ENCODE measurements at regions of chr14 and their contacts with region 1.

Region 1: GRCh38 chr14:74945823-74946682 is 9.3 kb downstream of the PGF start:
- DNase-seq: peak; percentile 61
- ATAC-seq: peak; percentile 67
- H3K4me3 Mint-ChIP-seq: no peak overlapping the region
- H3K27ac Mint-ChIP-seq: peak overlapping the region; percentile 46
- H3K4me1 Mint-ChIP-seq: peaks cover 34% of the 10 kb centered on the region
- H3K27me3 Mint-ChIP-seq: peaks cover 2% of the 10 kb centered on the region
- CTCF ChIP-seq: no peak

Region 2: DNA sequence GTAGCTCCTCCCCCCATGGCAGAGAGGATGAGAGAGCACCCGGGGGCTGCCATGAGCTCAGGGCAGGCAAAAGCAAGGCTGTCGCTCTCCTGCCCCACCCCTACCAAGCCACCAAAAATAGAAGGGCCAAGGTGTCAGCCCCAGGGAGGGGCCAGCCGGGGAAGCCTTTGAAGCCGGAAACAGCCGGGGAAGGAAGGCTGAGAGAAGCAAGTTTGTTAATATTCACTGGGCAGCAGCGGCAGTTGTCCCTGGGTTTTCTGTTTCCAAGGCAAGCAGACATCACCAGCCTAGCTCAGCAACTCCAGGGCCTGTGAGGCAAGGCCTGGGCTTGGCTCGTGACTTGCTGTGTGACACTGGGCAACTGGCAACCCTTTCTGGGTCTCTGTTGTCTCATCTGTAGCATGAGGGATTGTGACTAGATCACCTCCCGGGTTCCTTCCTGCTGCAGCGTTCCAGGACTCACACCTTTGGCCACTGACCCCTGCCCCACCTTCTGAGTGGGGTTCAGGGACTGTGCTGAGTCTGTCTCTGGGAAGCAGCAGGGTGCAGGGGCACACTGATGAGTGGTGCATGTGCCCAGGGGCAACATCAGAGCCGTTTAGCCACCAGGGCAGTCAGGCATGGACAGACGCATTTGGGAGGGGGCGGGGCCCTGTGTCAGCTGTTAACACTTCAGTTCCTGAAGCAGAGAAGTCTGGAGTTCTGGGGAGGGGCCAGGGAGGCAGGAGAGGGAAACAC is 544.4 kb before region 1 on chr14:
- CTCF ChIA-PET with region 1: no interaction called
- POLR2A ChIA-PET with region 1: no interaction called
- intact Hi-C with region 1: loop called (anchors 5 kb)
- DNase-seq: peak; percentile 74
- ATAC-seq: peak; percentile 90
- H3K4me3 Mint-ChIP-seq: peak overlapping the region; percentile 87
- H3K27ac Mint-ChIP-seq: peak overlapping the region; percentile 98
- H3K4me1 Mint-ChIP-seq: peaks cover 54% of the 10 kb centered on the region
- H3K27me3 Mint-ChIP-seq: no peaks in the 10 kb centered on the region
- CTCF ChIP-seq: no peak

Region 3: GRCh38 chr14:74608959-74609611 is 337.0 kb before region 1 on chr14:
- CTCF ChIA-PET with region 1: no interaction called
- POLR2A ChIA-PET with region 1: no interaction called
- intact Hi-C with region 1: no loop called
- DNase-seq: peak; percentile 68
- ATAC-seq: peak; percentile 57
- H3K4me3 Mint-ChIP-seq: no peak overlapping the region
- H3K27ac Mint-ChIP-seq: no peak overlapping the region
- H3K4me1 Mint-ChIP-seq: peaks cover 15% of the 10 kb centered on the region
- H3K27me3 Mint-ChIP-seq: peaks cover 8% of the 10 kb centered on the region
- CTCF ChIP-seq: peak; percentile 99

Region 4: GRCh38 chr14:74641601-74642391 is 304.3 kb before region 1 on chr14:
- CTCF ChIA-PET with region 1: no interaction called
- POLR2A ChIA-PET with region 1: no interaction called
- intact Hi-C with region 1: no loop called
- DNase-seq: no peak
- ATAC-seq: no peak
- H3K4me3 Mint-ChIP-seq: no peak overlapping the region
- H3K27ac Mint-ChIP-seq: no peak overlapping the region
- H3K4me1 Mint-ChIP-seq: no peaks in the 10 kb centered on the region
- H3K27me3 Mint-ChIP-seq: peaks cover 10% of the 10 kb centered on the region
- CTCF ChIP-seq: no peak

Region 5: DNA sequence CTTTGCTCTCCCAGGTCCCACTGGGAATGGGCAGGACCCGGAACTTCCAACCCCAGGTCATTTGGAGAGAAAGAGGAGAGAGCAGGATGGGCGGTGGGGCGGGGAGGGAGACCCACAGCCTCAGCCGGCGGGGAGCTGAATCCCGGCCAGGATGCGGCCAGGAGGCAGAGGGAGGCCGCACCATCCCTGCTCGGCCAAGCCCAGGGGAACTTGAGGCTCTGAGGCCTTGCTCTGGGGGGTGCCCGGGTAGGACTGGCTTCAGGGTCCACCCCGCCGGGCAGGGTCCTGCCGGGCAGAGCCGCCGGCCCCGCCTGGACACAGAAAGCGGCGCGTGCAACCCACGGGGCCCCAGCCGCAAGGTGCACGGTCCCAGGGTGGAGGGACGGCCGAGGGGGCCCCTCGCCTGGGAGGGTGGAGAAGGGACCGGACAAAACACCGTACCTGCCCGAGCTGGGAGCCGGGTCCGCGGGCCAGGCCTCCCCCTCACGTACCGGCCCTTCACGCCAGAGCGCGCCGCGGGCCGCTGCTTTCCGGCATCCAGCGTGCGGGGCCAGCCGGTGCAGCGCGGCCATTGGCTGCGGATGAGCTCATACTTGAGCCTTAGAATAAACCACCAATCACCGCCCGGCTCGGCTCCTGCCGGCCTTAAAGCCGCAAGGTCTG is 23.2 kb before region 1 on chr14 and contains the start of gene RPS6KL1:
- CTCF ChIA-PET with region 1: interaction called, 3 read pairs
- POLR2A ChIA-PET with region 1: interaction called, 11 read pairs
- intact Hi-C with region 1: no loop called
- DNase-seq: peak; percentile 59
- ATAC-seq: peak; percentile 98
- H3K4me3 Mint-ChIP-seq: peak within 1 kb of the TSS; percentile 69
- H3K27ac Mint-ChIP-seq: no peak within 1 kb of the TSS
- H3K4me1 Mint-ChIP-seq: peaks cover 8% of the 10 kb centered on the region
- H3K27me3 Mint-ChIP-seq: peaks cover 2% of the 10 kb centered on the region
- CTCF ChIP-seq: no peak
- total RNA-seq, gene RPS6KL1: 5.2 and 7.0 TPM in 2 replicates

Region 6: GRCh38 chr14:74963705-74964271 is 17.7 kb after region 1 on chr14:
- CTCF ChIA-PET with region 1: interaction called, 8 read pairs
- POLR2A ChIA-PET with region 1: no interaction called
- intact Hi-C with region 1: loop called (anchors 2 kb)
- DNase-seq: no peak
- ATAC-seq: no peak
- H3K4me3 Mint-ChIP-seq: no peak overlapping the region
- H3K27ac Mint-ChIP-seq: no peak overlapping the region
- H3K4me1 Mint-ChIP-seq: peaks cover 20% of the 10 kb centered on the region
- H3K27me3 Mint-ChIP-seq: no peaks in the 10 kb centered on the region
- CTCF ChIP-seq: no peak

Region 7: GRCh38 chr14:75088574-75089373 is 142.7 kb after region 1 on chr14:
- CTCF ChIA-PET with region 1: interaction called, 26 read pairs
- POLR2A ChIA-PET with region 1: no interaction called
- intact Hi-C with region 1: loop called (anchors 1 kb)
- DNase-seq: no peak
- ATAC-seq: peak; percentile 37
- H3K4me3 Mint-ChIP-seq: no peak overlapping the region
- H3K27ac Mint-ChIP-seq: no peak overlapping the region
- H3K4me1 Mint-ChIP-seq: no peaks in the 10 kb centered on the region
- H3K27me3 Mint-ChIP-seq: no peaks in the 10 kb centered on the region
- CTCF ChIP-seq: peak; percentile 72

Region 8: GRCh38 chr14:75198291-75198933 is 252.4 kb after region 1 on chr14:
- CTCF ChIA-PET with region 1: no interaction called
- POLR2A ChIA-PET with region 1: no interaction called
- intact Hi-C with region 1: no loop called
- DNase-seq: no peak
- ATAC-seq: no peak
- H3K4me3 Mint-ChIP-seq: no peak overlapping the region
- H3K27ac Mint-ChIP-seq: no peak overlapping the region
- H3K4me1 Mint-ChIP-seq: peaks cover 11% of the 10 kb centered on the region
- H3K27me3 Mint-ChIP-seq: no peaks in the 10 kb centered on the region
- CTCF ChIP-seq: no peak

Region 9: DNA sequence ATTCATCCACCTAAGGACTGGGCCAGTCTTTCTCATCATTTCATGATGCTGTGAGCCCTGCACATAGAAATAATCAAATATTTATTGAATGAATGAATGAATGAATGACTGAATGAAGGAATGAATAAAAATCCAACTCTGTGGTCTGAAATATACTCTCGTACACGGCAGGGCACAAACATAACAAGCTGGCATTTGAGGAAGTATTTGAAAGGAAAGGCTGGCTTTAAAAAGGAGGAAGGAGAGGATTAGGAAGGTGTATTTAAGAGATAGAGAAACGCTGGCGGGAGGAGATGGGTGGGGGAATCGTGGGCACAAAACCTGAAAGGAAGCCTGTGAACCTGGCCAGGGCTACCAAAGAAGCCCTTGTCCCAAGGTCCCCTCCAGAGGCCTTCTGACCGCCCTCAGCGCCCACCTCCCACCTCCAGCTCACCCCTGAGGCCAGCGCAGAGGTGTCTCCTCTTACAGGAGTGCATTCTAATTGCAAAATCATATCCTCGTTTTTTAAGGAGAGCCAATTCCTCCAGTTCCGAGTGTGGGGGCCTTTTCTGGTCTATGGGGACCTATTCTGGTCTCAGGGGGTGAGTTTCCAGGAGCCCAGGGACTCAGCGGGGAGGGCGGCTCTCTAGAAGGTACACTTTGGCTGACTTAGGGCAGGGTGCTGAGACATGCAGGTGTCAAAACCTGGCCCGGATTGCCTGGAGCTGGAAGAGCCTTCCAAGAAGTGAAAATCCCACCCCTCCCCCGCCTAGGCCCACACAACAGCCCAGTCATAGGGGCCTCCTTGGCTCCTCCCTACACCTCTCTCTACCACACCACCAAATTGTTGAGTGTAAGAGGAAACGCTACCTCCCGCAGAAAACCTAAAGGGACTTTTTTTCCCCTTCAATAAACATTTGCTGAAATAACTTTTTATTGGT is 473.1 kb after region 1 on chr14:
- CTCF ChIA-PET with region 1: no interaction called
- POLR2A ChIA-PET with region 1: no interaction called
- intact Hi-C with region 1: no loop called
- DNase-seq: peak; percentile 28
- ATAC-seq: peak; percentile 94
- H3K4me3 Mint-ChIP-seq: peak overlapping the region; percentile 28
- H3K27ac Mint-ChIP-seq: peak overlapping the region; percentile 46
- H3K4me1 Mint-ChIP-seq: peaks cover 19% of the 10 kb centered on the region
- H3K27me3 Mint-ChIP-seq: no peaks in the 10 kb centered on the region
- CTCF ChIP-seq: no peak